HEK293 (cell line): ENCODE measurements at regions of chr17 and their contacts with region 1.

Region 1: GRCh38 chr17:75059369-75060345 is 12.6 kb downstream of the KCTD2 start:
- H3K4me3 ChIP-seq: no peak overlapping the region
- H3K27ac ChIP-seq: 0 out of 2 replicates have a peak overlapping the region, but pooled peaks have one; percentile 44
- H3K4me1 ChIP-seq: no peaks in the 10 kb centered on the region
- CTCF ChIP-seq: no peak

Region 2: DNA sequence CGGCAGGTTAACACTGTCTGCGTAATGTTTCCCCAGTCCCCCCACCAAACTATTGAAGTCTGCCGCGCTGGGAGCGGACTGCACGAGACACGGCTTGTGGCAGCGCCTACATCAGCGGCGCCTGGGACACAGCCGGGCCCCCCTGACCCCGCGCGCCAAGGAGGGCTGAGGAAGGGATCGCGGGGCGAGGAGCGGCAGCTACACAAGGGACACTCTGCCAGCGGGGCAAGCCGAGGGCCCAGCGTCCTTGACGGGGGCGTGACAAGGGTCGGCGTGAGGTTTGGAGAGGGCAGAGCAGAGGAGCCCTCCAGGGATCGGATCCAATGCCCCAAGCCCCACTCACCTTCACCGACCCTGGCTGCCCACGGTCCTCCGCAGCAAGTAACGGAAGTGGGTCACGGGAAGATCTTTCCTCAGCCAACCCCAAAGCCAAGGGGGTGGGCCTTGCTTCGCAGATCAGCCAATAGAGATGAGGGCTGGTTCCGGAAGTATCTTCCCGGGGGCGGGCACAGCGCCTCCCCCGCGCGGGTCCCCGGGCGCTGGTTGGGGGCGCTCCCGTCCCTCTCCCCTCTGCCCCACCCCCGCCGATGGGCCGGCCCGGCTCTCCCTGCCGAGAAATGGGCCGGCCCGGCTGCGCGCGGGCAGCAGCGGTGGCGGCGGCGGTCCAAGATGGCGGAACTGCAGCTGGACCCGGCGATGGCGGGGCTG is 12.9 kb before region 1 on chr17 and contains the starts of genes ATP5PD and KCTD2:
- CTCF ChIA-PET with region 1: interaction called, 14 read pairs
- POLR2A ChIA-PET with region 1: interaction called, 4 read pairs
- H3K4me3 ChIP-seq: peak within 1 kb of the TSS; percentile 99
- H3K27ac ChIP-seq: peak within 1 kb of the TSS; percentile 92
- H3K4me1 ChIP-seq: peaks cover 8% of the 10 kb centered on the region; the same call in 1 of the 2 replicates
- CTCF ChIP-seq: 0 out of 2 replicates have a peak, but pooled peaks have one; percentile 45

Region 3: DNA sequence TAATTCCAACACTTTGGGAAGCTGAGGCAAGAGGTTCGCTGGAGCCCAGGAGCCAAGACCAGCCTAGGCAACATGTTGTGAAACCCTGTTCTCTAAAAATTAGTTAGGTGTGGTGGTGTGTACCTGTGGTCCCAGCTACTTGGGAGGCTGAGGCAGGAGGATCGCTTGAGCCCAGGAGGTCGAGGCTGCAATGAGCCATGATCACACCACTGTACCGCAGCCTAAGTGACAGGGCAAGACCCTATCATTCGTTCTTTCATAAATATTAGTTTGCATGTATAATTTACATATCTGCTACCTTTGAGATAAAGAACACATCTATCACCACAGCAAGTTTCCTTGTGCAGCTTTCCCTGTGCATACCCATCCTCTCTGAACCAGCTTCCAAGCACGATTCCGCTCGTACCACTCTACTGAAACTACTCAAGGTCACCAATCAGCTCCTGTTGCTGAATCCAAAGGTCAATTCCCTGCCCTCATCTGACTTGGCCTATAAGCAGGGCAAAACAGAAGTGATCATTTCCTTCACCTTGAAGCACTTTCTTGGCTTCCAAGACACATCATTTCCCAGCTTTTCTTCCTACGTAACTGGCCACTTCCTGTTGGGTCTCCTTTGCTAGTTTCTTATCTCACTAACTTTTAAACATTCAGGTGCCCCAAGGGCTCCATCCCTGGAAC is 296.7 kb after region 1 on chr17:
- CTCF ChIA-PET with region 1: no interaction called
- POLR2A ChIA-PET with region 1: no interaction called
- H3K4me3 ChIP-seq: no peak overlapping the region
- H3K27ac ChIP-seq: no peak overlapping the region
- H3K4me1 ChIP-seq: peaks cover 19% of the 10 kb centered on the region
- CTCF ChIP-seq: no peak